Activated CD4-positive, alpha-beta T cell treated with anti-CD3 and anti-CD28 coated beads, Interleukin-2, amount 10 ng/mL, durations not matched to agents 7 days and 5 days (primary cell): ENCODE measurements at regions of chr9 and their contacts with region 1.

Region 1: GRCh38 chr9:21334701-21335632 is at the start of gene KLHL9:
- DNase-seq: peak; percentile 87
- H3K4me3 Mint-ChIP-seq: peak within 1 kb of the TSS; percentile 91
- H3K27ac Mint-ChIP-seq: peak within 1 kb of the TSS; percentile 96
- H3K4me1 Mint-ChIP-seq: peaks cover 50% of the 10 kb centered on the region
- H3K27me3 Mint-ChIP-seq: peaks cover 12% of the 10 kb centered on the region
- total RNA-seq, gene KLHL9: 20.9 to 21.8 TPM

Region 2: GRCh38 chr9:21395778-21396717 is 61.1 kb after region 1 on chr9:
- CTCF ChIA-PET with region 1: interaction called, 10 read pairs
- POLR2A ChIA-PET with region 1: no interaction called
- DNase-seq: peak; percentile 63
- H3K4me3 Mint-ChIP-seq: peak overlapping the region; percentile 41
- H3K27ac Mint-ChIP-seq: no peak overlapping the region
- H3K4me1 Mint-ChIP-seq: peaks cover 6% of the 10 kb centered on the region
- H3K27me3 Mint-ChIP-seq: peaks cover 63% of the 10 kb centered on the region